Heart left ventricle (tissue), 16 donors: ENCODE measurements at regions of chr1 and their contacts with region 1.

Region 1: GRCh38 chr1:87523466-87523865 is 194.8 kb downstream of the LMO4 start:
- DNase-seq: peak in 1 of 5 donors; percentile 13
- ATAC-seq: no peak
- H3K4me3 ChIP-seq: no peak overlapping the region
- H3K27ac ChIP-seq: peak overlapping the region in 3 of 12 donors; percentile 3 to 50 (median 39)
- H3K4me1 ChIP-seq: peaks cover 0 to 5% (median 0%) of the 10 kb centered on the region in 12 donors
- H3K27me3 ChIP-seq: no peaks in the 10 kb centered on the region
- CTCF ChIP-seq: no peak
- POLR2A ChIP-seq: no peak

Region 2: DNA sequence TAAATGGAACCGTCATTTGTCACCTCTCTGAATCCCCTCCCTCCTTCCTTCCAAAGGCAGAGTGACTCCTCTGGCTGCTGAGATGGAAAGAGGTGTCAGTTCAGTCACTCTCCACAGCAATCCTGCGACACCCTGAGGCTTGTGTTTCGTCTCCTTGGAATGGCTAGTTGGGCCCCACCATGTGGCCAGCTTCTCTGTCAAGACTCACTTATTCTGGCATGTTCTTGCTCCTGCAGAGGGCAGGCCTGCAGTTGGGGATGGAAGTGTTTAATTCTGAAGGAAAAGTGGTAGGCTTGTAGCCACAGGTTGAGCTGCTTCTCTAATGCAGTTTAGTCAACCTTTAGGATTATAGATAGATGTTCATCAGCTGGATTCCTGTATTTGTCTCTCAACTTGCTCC is 45.2 kb before region 1 on chr1:
- intact Hi-C with region 1: loop called in 1 of 10 experiments (anchors 2 kb)
- DNase-seq: peak in 3 of 5 donors; percentile 19 to 46 (median 22)
- ATAC-seq: peak in 2 of 4 donors; percentile 39 to 56
- H3K4me3 ChIP-seq: no peak overlapping the region
- H3K27ac ChIP-seq: no peak overlapping the region
- H3K4me1 ChIP-seq: no peaks in the 10 kb centered on the region
- H3K27me3 ChIP-seq: no peaks in the 10 kb centered on the region
- CTCF ChIP-seq: peak in 6 of 12 donors; percentile 10 to 51 (median 32)
- POLR2A ChIP-seq: no peak